ENCODE measurements at regions of chr16 and their contacts with region 1.

Region 1: GRCh38 chr16:89720813-89721545 is at the starts of genes VPS9D1 and ZNF276:
- DNase-seq: peak in 1 of 2 experiments; percentile 89
- H3K4me3 ChIP-seq: peak within 1 kb of the TSS; percentile 64 to 87 (median 68)
- H3K27ac ChIP-seq: peak within 1 kb of the TSS; percentile 52; the same call in 1 of the 2 replicates
- H3K4me1 ChIP-seq: peaks cover 0 to 13% (median 10%) of the 10 kb centered on the region in 4 experiments; a peak in 5 of 7 replicates
- H3K27me3 ChIP-seq: peaks cover 8 to 58% (median 46%) of the 10 kb centered on the region in 4 experiments
- CTCF ChIP-seq: no peak
- EP300 ChIP-seq: no peak
- POLR2A ChIP-seq: peak in 1 of 2 experiments; percentile 67; a peak in 2 of 3 replicates
- RAD21 ChIP-seq: no peak
- total RNA-seq, gene VPS9D1: 5.4 and 5.8 TPM in 2 replicates
- total RNA-seq, gene ZNF276: 9.3 and 9.6 TPM in 2 replicates

Region 2: GRCh38 chr16:89410794-89411309 is 310.1 kb before region 1 on chr16:
- CTCF ChIA-PET with region 1: no interaction called
- POLR2A ChIA-PET with region 1: no interaction called
- DNase-seq: no peak
- H3K4me3 ChIP-seq: no peak overlapping the region
- H3K27ac ChIP-seq: no peak overlapping the region
- H3K4me1 ChIP-seq: peaks cover 2 to 45% (median 28%) of the 10 kb centered on the region in 4 experiments
- H3K27me3 ChIP-seq: no peaks in the 10 kb centered on the region
- CTCF ChIP-seq: no peak
- EP300 ChIP-seq: no peak
- POLR2A ChIP-seq: no peak
- RAD21 ChIP-seq: no peak

Region 3: DNA sequence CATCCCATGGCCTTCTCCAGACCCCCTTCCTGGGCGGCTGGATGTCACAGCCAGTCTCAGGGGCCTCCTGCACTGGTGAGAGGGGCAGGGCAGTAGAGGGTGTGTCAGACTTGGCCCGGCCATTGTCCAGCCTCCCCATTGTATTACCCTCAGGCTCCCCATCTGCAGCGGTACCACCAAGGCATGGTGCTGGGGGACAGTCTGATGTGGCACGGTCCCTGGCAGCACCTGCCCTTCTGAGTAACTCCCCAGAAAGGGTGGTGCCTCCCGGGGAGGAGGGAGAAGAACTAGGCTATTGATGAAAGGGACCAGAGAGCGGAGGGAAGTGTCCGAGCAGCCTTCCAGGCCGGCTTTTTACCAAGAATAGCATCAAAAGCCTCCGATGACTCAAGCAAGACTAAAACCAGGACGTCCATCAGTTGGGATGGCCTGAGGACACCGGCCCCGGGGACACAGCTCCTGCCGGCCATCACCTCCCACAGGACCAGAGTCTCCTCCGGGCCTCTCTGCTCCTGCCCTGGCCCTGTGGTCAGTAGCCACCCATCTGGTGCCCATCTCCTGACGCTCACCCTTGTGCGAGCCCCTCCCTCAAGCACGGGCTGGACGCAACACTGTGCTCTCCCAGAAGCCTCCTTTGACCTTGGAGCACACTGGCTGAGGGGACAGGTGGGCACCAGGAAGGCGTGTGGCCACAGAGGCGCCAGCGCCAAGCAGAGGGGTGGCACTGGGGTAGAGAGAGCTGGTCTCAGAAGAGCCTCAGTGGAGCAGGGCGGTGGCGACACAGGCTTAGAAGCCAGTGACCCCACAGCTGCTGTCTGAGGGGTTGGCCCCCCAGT is 151.3 kb before region 1 on chr16:
- CTCF ChIA-PET with region 1: no interaction called
- POLR2A ChIA-PET with region 1: no interaction called
- DNase-seq: no peak
- H3K4me3 ChIP-seq: no peak overlapping the region
- H3K27ac ChIP-seq: no peak overlapping the region
- H3K4me1 ChIP-seq: peaks cover 0 to 18% (median 8%) of the 10 kb centered on the region in 4 experiments; a peak in 5 of 7 replicates
- H3K27me3 ChIP-seq: peaks cover 0 to 11% (median 4%) of the 10 kb centered on the region in 4 experiments; a peak in 2 of 7 replicates
- CTCF ChIP-seq: no peak
- EP300 ChIP-seq: no peak
- POLR2A ChIP-seq: no peak
- RAD21 ChIP-seq: no peak

Region 4: GRCh38 chr16:89633064-89633631 is 87.8 kb before region 1 on chr16:
- CTCF ChIA-PET with region 1: no interaction called
- POLR2A ChIA-PET with region 1: no interaction called
- DNase-seq: no peak
- H3K4me3 ChIP-seq: no peak overlapping the region
- H3K27ac ChIP-seq: no peak overlapping the region
- H3K4me1 ChIP-seq: peaks cover 0 to 7% (median 0%) of the 10 kb centered on the region in 4 experiments; a peak in 1 of 7 replicates
- H3K27me3 ChIP-seq: no peaks in the 10 kb centered on the region; a peak in 3 of 7 replicates
- CTCF ChIP-seq: no peak
- EP300 ChIP-seq: no peak
- POLR2A ChIP-seq: no peak
- RAD21 ChIP-seq: no peak

Region 5: DNA sequence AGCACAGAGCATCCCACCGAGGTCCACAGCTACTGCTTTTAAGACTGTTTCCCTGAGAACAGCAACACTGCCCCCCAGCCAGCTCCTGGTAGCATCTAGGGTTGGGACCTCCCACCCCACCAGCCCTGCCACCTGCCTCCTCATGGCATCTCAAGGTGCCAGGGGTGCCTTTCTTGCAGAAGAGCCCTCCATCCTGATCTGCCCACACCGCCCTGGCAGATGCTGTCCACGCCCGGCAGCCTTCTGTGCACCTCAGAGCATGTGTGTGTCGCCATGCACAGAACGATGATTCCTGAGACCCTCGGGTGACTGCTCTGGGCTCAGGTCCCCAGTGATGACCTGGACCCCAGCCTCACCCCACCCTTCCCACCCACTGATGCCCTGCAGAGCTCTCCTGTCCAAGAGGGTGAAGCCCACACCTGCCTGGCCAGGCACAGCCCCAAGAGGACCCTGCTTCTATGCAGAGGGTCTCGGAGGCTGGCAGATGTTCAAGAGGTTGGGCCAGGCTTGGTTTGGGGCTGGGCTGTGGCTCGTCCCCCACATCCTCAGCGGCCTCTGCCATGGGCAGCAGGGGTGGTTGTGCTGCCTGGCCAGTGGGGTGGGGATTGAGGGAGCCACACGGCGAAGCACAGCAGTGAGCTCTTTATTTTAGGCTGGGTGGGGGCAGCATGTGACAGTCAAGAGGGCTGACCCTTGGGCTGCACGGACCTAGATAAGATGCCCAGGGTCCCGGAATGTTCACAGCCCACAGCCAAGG is 14.3 kb before region 1 on chr16:
- CTCF ChIA-PET with region 1: interaction called, 17 read pairs
- POLR2A ChIA-PET with region 1: interaction called, 193 read pairs
- DNase-seq: no peak
- H3K4me3 ChIP-seq: peak overlapping the region in 1 of 4 experiments; percentile 22; a peak in 2 of 8 replicates
- H3K27ac ChIP-seq: no peak overlapping the region
- H3K4me1 ChIP-seq: peaks cover 0 to 18% (median 11%) of the 10 kb centered on the region in 4 experiments; a peak in 6 of 7 replicates
- H3K27me3 ChIP-seq: peaks cover 0 to 9% (median 2%) of the 10 kb centered on the region in 4 experiments; a peak in 3 of 7 replicates
- CTCF ChIP-seq: no peak
- EP300 ChIP-seq: no peak
- POLR2A ChIP-seq: no peak
- RAD21 ChIP-seq: no peak

Region 6: GRCh38 chr16:89759746-89760340 is 38.9 kb after region 1 on chr16:
- CTCF ChIA-PET with region 1: no interaction called
- POLR2A ChIA-PET with region 1: no interaction called
- DNase-seq: no peak
- H3K4me3 ChIP-seq: no peak overlapping the region
- H3K27ac ChIP-seq: no peak overlapping the region
- H3K4me1 ChIP-seq: no peaks in the 10 kb centered on the region
- H3K27me3 ChIP-seq: no peaks in the 10 kb centered on the region
- CTCF ChIP-seq: no peak
- EP300 ChIP-seq: no peak
- POLR2A ChIP-seq: no peak
- RAD21 ChIP-seq: no peak

Region 7: GRCh38 chr16:89873972-89874689 is 153.2 kb after region 1 on chr16:
- CTCF ChIA-PET with region 1: no interaction called
- POLR2A ChIA-PET with region 1: interaction called, 10 read pairs
- DNase-seq: peak; percentile 92 to 98
- H3K4me3 ChIP-seq: peak overlapping the region; percentile 84 to 97 (median 90)
- H3K27ac ChIP-seq: peak overlapping the region; percentile 40; the same call in 1 of the 2 replicates
- H3K4me1 ChIP-seq: peaks cover 0 to 9% (median 2%) of the 10 kb centered on the region in 4 experiments; a peak in 4 of 7 replicates
- H3K27me3 ChIP-seq: no peaks in the 10 kb centered on the region
- CTCF ChIP-seq: no peak
- EP300 ChIP-seq: no peak
- POLR2A ChIP-seq: peak in 1 of 2 experiments; percentile 35; a peak in 1 of 3 replicates
- RAD21 ChIP-seq: no peak

Measured in H1 (cell line).